AG04449 (cell line): ENCODE measurements at regions of chr6 and their contacts with region 1.

Region 1: DNA sequence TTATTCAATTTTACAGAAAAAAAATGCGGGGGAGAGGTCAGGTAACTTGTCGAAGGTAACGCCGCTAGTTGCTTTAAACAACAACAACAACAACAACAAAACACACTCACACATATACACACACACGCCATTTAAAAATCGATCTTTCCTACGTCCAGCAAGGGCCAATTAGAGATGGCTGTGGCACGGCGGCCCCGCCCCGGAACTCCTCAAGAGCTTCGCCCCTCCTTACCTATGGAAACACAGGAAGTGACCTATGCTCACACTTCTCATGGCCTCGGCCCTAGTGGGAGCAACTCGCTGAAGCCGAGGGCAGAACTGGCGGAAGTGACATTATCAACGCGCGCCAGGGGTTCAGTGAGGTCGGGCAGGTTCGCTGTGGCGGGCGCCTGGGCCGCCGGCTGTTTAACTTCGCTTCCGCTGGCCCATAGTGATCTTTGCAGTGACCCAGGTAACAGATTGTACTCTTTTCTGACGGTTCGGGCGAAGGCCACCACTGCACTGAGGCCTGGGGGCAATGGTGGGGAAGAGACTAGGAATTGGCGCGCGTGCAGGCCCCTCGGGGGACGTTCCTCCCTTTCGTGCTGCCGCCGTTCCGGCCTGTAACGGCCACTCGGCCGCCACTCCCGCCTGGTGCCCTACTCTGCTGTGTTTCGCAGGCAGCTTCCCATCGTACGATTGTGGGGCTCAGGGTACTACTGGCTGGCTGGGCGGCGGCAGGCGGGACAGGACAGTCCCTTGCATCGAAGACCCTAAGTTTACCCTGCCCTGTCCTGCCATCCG is at the start of gene TBP:
- DNase-seq: peak; percentile 95
- H3K4me3 ChIP-seq: peak within 1 kb of the TSS; percentile 90
- CTCF ChIP-seq: no peak

Region 2: DNA sequence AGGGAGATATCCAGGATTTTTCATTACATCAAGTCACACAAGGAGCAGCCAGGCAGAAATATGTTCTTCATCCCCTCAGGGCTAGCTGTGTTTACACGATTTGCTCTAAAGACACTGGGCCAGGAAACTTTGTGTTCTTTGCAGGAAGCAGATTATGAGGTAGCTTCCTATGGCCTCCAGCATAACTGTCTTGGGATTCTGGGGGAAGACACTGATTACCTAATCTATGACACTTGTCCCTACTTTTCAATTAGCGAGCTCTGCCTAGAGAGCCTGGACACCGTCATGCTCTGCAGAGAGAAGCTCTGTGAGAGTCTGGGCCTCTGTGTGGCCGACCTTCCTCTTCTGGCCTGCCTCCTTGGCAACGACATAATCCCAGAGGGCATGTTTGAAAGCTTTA is 236.5 kb before region 1 on chr6:
- CTCF ChIA-PET with region 1: no interaction called
- POLR2A ChIA-PET with region 1: no interaction called
- DNase-seq: no peak
- H3K4me3 ChIP-seq: no peak overlapping the region
- CTCF ChIP-seq: no peak

Region 3: DNA sequence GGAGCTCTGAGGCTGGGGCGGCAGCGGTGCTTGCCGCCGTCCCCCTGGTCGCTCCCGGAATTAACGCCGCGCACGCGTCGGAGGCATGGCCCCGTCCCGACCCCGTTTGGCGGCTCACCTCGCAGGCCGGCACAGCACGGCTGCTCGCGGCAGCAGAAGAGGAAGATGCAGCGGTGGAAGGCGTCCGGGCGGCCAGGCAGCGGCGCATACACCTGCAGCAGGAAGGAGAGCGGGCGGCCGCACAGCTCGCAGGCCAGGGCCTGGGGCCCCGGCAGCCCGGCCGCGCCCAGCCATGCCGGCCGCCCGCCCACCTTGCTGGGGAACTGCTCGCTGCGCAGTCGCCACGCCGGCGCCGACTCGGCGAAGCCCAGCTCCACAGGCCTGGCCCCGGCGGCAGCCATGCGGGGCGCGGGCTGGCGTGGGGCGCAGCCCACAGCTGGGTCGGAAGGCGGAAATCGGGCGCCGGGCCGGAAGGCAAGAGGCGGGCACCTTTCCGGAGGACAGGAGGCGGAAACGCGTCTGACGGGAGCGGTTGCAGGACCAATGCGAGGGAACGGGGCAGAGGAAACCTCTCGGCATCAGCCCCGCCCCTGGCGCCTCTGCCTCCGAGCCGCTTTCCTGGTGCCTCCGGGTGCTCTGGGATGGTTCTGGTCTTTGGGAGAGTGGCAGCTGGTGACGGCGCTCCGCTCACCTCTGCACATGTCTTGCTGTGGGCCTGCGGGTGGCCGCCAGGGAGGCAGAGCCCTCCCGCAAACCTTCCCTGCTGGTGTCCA is 30.2 kb after region 1 on chr6 and contains the start of gene PDCD2:
- CTCF ChIA-PET with region 1: interaction called, 5 read pairs
- POLR2A ChIA-PET with region 1: interaction called, 11 read pairs
- DNase-seq: peak; percentile 12
- H3K4me3 ChIP-seq: peak within 1 kb of the TSS; percentile 94
- CTCF ChIP-seq: no peak